MCF 10A (cell line): ENCODE measurements at regions of chr12 and their contacts with region 1.

Region 1: DNA sequence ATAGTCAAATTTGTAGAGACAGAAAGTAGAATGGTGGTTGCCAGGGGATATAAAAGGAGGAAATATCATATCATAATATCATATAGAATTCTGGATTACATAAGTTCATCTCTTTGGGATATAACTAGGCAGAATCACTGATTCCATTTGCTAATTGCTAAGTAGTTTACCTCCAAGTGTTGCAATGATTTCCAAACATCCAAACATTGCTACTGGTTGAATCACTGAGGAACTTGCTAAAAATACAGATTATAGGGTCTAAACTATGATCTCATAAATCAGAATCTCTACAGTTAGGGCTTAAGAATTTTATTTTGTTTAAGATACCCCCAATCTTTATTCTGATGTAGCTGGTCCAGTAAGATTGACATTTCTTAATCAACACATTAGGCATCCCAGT is 16.1 kb upstream of the TAS2R42 start:
- DNase-seq: no peak
- H3K4me3 Mint-ChIP-seq: no peak overlapping the region
- H3K27ac Mint-ChIP-seq: no peak overlapping the region
- H3K4me1 Mint-ChIP-seq: peaks cover 6% of the 10 kb centered on the region
- H3K27me3 Mint-ChIP-seq: peaks cover 11% of the 10 kb centered on the region
- CTCF ChIP-seq: no peak

Region 2: DNA sequence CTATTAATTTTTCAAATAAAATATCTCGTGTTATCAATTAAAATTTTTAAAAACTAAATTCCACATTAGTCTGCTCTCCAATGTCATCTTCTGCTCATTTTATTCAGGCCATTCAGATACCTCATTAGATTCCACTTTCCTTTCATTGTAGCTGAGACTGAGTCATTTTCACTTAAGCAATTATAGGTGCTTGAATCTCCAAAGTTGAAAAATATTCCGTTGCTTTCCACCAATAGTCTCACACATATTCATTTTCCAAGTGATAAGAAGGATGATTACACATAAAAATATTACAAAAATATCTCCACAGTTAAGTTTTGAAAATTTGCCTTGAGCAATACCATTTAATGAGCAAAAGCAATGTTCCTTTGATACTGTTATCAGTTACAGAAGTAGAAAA is 443.2 kb before region 1 on chr12:
- CTCF ChIA-PET with region 1: interaction called, 12 read pairs
- POLR2A ChIA-PET with region 1: no interaction called
- intact Hi-C with region 1: no loop called
- DNase-seq: no peak
- H3K4me3 Mint-ChIP-seq: no peak overlapping the region
- H3K27ac Mint-ChIP-seq: no peak overlapping the region
- H3K4me1 Mint-ChIP-seq: no peaks in the 10 kb centered on the region
- H3K27me3 Mint-ChIP-seq: peaks cover 66% of the 10 kb centered on the region
- CTCF ChIP-seq: no peak

Region 3: DNA sequence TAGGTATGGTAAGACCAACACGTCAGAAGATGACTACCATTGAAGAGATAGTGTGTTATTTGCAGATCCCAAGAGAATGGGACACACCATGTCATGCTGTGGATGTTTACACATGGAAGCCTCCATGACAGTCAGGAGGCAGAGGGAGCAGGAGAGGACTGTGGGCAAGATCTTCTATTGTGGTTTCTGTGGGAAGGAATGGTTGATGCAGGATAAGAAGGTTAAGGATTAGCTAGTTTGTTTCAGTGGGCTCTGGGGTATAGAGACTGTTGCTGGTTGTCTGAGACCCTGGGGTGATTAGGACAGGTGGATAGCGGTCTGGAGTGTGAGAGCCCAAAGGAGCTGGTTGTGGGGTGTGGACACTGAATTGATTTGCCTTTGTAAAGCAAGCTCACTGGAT is 423.7 kb before region 1 on chr12:
- CTCF ChIA-PET with region 1: interaction called, 138 read pairs
- POLR2A ChIA-PET with region 1: no interaction called
- intact Hi-C with region 1: no loop called
- DNase-seq: no peak
- H3K4me3 Mint-ChIP-seq: no peak overlapping the region
- H3K27ac Mint-ChIP-seq: no peak overlapping the region
- H3K4me1 Mint-ChIP-seq: no peaks in the 10 kb centered on the region
- H3K27me3 Mint-ChIP-seq: peaks cover 44% of the 10 kb centered on the region
- CTCF ChIP-seq: no peak

Region 4: DNA sequence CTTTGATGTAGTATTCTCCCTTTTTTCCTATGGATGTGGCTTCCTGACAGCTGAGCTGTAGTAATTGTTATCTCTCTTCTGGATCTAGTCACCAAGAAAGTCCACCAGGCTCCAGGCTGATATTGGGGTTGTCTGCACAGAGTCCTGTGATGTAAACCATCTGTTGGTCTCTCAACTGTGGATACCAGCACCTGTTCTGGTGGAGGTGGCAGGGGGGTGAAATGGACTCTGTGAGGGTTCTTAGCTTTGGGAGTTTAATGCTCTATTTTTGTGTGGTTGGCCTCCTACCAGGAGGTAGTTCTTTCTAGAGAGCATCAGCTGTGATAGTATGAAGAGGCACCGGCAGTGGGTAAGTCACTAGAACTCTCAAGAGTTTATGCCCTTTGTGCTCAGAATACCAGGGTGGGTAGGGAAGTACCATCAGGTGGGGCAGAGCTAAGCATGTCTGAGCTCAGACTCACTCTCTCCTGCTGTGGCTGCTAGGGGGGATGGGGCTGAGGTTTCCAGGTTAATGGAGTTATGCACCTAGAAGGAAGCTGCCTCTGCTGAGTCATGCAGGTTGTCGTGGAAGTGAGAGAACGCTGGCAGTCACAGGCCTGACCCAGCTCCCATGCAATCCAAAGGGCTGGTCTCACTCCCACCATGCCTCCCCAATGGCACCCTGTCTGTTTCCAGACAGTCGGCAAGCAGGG is 260.7 kb before region 1 on chr12:
- CTCF ChIA-PET with region 1: interaction called, 11 read pairs
- POLR2A ChIA-PET with region 1: no interaction called
- intact Hi-C with region 1: no loop called
- DNase-seq: peak; percentile 72
- H3K4me3 Mint-ChIP-seq: no peak overlapping the region
- H3K27ac Mint-ChIP-seq: peak overlapping the region; percentile 78
- H3K4me1 Mint-ChIP-seq: peaks cover 31% of the 10 kb centered on the region
- H3K27me3 Mint-ChIP-seq: no peaks in the 10 kb centered on the region
- CTCF ChIP-seq: no peak

Region 5: GRCh38 chr12:11228296-11228879 is 25.6 kb after region 1 on chr12:
- CTCF ChIA-PET with region 1: interaction called, 16 read pairs
- POLR2A ChIA-PET with region 1: no interaction called
- intact Hi-C with region 1: no loop called
- DNase-seq: peak; percentile 67
- H3K4me3 Mint-ChIP-seq: no peak overlapping the region
- H3K27ac Mint-ChIP-seq: no peak overlapping the region
- H3K4me1 Mint-ChIP-seq: no peaks in the 10 kb centered on the region
- H3K27me3 Mint-ChIP-seq: peaks cover 79% of the 10 kb centered on the region
- CTCF ChIP-seq: peak; percentile 86